ENCODE measurements at regions of chr6 and their contacts with region 1.

Region 1: DNA sequence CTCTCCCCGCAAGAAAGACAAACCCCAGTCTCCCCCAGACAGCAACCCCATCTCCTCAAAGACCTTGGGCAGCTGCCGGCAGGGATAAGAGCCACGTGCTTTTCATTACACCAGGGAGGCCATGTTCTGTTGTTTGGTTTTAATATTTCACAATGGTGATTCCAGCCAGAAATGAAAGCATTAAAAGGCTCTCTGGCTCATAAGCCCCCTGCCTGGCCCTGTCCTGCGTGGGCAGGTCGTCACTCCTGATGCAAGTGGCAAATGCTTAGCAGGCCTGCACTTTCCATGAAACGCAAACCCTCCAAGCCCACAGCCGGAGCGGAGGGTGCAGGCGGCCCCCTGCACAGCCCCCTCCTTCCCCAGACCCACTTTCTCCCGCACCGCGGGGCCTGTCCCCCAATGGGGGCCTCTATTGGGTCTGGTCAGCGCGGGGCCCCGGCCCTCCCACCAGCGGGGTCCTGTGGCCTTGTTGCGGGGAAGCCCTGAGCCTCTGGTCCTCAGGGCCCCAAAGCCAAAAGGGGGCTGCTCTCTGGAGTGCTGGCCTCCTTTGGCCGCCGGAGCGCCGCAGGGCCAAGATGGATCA is 77.2 kb downstream of the TMEM242 start:
- DNase-seq: no peak
- H3K4me3 Mint-ChIP-seq: no peak overlapping the region
- H3K27ac Mint-ChIP-seq: no peak overlapping the region
- H3K4me1 Mint-ChIP-seq: no peaks in the 10 kb centered on the region
- H3K27me3 Mint-ChIP-seq: peaks cover 26% of the 10 kb centered on the region

Region 2: DNA sequence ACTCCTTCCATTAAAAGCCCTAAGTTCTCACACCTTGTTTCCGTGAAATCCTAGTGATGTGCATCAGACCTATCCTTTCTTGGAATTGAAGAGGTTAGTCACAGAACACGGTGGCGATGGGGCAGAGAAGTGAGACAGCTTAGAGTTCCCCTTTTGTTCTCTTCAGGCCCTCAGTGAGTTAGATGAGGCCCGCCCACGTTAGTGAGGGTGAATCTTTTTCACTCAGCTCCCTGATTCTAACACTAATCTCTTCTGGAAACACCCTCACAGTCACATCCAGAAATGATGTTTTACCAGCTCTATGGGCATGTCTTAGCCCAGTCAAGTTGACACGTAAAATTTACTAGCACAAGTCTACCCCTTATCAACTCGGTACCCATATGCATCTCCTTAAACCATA is 1617.8 kb before region 1 on chr6:
- intact Hi-C with region 1: loop called (anchors 5 kb)
- DNase-seq: peak; percentile 5
- H3K4me3 Mint-ChIP-seq: no peak overlapping the region
- H3K27ac Mint-ChIP-seq: peak overlapping the region; percentile 85
- H3K4me1 Mint-ChIP-seq: peaks cover 9% of the 10 kb centered on the region
- H3K27me3 Mint-ChIP-seq: peaks cover 2% of the 10 kb centered on the region

Measured in activated T-helper 1 cell treated with anti-CD3 and anti-CD28 coated beads, Interleukin-12 subunit alpha, Interleukin-12 subunit beta, Interleukin-2, Interleukin-4 antibody, amounts not matched to agents 30 ng/mL and 10 ng/mL and 1 ng/mL, durations not matched to agents 14 hours and 24 hours and 36 hours (primary cell).